PC-9 (cell line): ENCODE measurements at regions of chr3 and their contacts with region 1.

Region 1: DNA sequence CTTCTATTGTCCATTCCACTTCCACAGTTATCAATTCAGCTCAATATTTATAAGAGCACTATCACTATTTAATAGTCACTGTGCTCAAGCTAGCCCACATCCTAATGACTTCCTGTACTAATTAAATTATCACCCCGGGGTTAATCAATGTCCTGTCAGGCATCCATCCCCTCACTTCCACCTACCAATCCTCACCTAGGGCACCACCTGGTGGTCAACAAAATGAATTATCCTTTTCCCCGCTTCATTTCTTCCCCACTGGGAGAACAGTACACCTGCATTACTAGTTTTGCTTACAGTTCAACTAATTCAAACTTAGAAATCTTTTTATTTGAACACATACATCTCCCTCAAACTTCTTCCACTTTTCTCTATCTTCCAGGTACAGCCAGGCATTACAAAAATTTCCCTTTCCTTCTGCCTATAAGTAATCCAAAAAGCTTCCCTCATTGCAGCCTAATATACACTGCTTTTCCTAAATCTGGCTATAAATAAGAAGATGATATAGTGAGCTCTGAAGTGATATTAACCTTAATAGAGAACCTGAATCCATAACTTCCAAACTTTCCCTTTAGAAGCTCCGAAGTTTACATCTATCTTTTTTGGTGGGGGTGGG is 68.5 kb downstream of the TMCC1 start:
- DNase-seq: peak; percentile 39 to 52
- H3K4me3 ChIP-seq: no peak overlapping the region
- H3K27ac ChIP-seq: no peak overlapping the region
- H3K4me1 ChIP-seq: peaks cover 32% of the 10 kb centered on the region
- H3K27me3 ChIP-seq: no peaks in the 10 kb centered on the region
- CTCF ChIP-seq: peak; percentile 87

Region 2: GRCh38 chr3:129249276-129250065 is 575.6 kb before region 1 on chr3 and contains the start of gene COPG1:
- CTCF ChIA-PET with region 1: interaction called, 23 read pairs
- POLR2A ChIA-PET with region 1: interaction called, 4 read pairs
- intact Hi-C with region 1: no loop called
- DNase-seq: peak; percentile 73 to 92
- H3K4me3 ChIP-seq: peak within 1 kb of the TSS; percentile 88
- H3K27ac ChIP-seq: peak within 1 kb of the TSS; percentile 56
- H3K4me1 ChIP-seq: peaks cover 21% of the 10 kb centered on the region
- H3K27me3 ChIP-seq: no peaks in the 10 kb centered on the region
- CTCF ChIP-seq: no peak
- total RNA-seq, gene COPG1: 195 and 212 TPM in 2 replicates

Region 3: DNA sequence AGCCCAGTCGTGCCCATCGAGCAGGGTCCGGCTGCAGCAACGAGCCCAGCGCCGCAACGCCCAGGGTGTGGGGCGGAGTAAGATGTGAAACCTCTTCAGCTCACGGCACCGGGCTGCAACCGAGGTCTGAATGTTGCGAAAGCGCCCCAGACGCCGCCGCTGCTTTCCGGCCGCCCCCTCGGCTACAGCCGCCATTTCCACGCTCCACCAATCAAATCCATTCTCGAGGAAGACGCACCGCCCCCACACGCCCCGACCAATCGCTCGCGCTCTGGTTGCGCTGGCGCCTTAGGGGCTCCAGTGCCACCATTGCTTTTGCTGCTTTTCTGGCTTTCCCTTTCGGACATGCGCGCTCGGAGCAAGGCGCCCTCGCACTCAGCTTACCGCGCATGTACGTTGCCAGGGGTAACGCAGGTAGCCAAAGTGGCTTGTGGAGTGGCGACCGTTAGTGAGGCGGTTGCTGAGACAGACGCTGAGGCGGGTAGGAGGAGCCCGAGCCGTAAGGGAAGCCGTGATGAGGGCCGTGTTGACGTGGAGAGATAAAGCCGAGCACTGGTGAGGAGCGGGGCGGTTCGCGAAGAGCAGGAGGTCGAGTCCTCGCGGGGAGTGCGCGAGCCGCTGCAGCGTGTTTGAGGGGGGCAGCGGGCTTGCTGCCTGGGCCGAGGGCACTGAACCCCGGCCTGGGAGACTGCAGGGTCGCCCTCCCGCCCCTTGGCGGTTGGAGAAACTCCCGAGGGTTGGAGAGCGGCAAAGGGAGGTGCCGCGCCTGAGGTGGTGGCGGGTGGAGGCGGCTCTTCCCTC is 385.0 kb before region 1 on chr3 and contains the starts of genes IFT122 and MBD4:
- CTCF ChIA-PET with region 1: interaction called, 18 read pairs
- POLR2A ChIA-PET with region 1: no interaction called
- intact Hi-C with region 1: no loop called
- DNase-seq: peak; percentile 97 to 99
- H3K4me3 ChIP-seq: peak within 1 kb of the TSS; percentile 79
- H3K27ac ChIP-seq: peak within 1 kb of the TSS; percentile 62
- H3K4me1 ChIP-seq: peaks cover 38% of the 10 kb centered on the region
- H3K27me3 ChIP-seq: no peaks in the 10 kb centered on the region
- CTCF ChIP-seq: no peak
- total RNA-seq, gene IFT122: 44.8 and 55.6 TPM in 2 replicates
- total RNA-seq, gene MBD4: 48.6 and 49.4 TPM in 2 replicates

Region 4: GRCh38 chr3:129650256-129650872 is 174.7 kb before region 1 on chr3:
- CTCF ChIA-PET with region 1: interaction called, 6 read pairs
- POLR2A ChIA-PET with region 1: no interaction called
- intact Hi-C with region 1: loop called (anchors 1 kb)
- DNase-seq: peak; percentile 68 to 78
- H3K4me3 ChIP-seq: no peak overlapping the region
- H3K27ac ChIP-seq: peak overlapping the region; percentile 91
- H3K4me1 ChIP-seq: peaks cover 64% of the 10 kb centered on the region
- H3K27me3 ChIP-seq: no peaks in the 10 kb centered on the region
- CTCF ChIP-seq: peak; percentile 83

Region 5: GRCh38 chr3:129809297-129809696 is 15.7 kb before region 1 on chr3:
- CTCF ChIA-PET with region 1: no interaction called
- POLR2A ChIA-PET with region 1: no interaction called
- intact Hi-C with region 1: no loop called
- DNase-seq: no peak
- H3K4me3 ChIP-seq: no peak overlapping the region
- H3K27ac ChIP-seq: 0 out of 2 replicates have a peak overlapping the region, but pooled peaks have one; percentile 19
- H3K4me1 ChIP-seq: no peaks in the 10 kb centered on the region
- H3K27me3 ChIP-seq: no peaks in the 10 kb centered on the region
- CTCF ChIP-seq: no peak

Region 6: DNA sequence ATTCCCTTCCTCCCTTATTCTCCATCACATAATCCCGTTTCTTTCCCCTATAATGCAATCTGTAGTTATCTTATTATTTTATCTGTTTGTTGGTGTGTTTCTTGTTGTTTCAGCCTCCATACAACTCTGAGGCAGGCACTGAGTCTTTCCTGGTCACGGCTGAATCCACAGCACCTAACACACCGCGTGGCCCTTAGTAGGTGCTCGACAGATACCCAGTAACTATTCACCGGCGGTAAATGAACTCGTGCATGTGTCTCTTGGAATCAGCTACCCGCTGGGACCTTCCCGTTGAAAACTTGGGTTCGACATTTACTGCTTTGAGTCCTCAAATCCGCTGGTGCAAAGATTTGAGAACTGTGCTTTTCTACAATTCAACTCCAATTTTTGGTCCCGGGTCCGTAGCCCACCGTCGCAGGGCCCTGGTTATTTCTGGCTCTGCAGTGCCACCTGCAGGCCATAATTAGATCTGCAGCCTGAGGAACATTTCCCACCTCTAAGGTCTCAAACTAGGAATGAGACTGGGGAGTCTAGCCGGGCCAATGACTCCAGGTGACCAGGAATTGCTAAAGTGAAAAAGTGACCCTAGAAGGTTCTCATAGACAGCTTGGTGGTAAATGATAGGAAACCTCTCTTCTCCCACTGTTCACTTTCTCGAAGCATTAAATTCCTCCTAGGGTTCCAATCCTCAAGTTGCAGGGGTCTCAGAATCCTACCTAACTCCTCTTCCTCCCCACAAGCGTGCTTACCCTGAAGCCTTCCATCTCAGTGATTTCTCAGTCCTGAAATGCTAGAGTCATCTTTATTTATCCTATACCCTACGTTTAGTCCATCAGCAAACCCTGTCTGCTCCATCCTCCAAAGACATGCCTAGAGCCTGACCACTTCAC is 109.4 kb after region 1 on chr3:
- CTCF ChIA-PET with region 1: interaction called, 5 read pairs
- POLR2A ChIA-PET with region 1: no interaction called
- intact Hi-C with region 1: loop called (anchors 1 kb)
- DNase-seq: peak in 1 of 2 experiments; percentile 26
- H3K4me3 ChIP-seq: no peak overlapping the region
- H3K27ac ChIP-seq: no peak overlapping the region
- H3K4me1 ChIP-seq: no peaks in the 10 kb centered on the region
- H3K27me3 ChIP-seq: no peaks in the 10 kb centered on the region
- CTCF ChIP-seq: peak; percentile 98

Region 7: GRCh38 chr3:130258532-130258952 is 433.5 kb after region 1 on chr3:
- CTCF ChIA-PET with region 1: no interaction called
- POLR2A ChIA-PET with region 1: no interaction called
- intact Hi-C with region 1: no loop called
- DNase-seq: no peak
- H3K4me3 ChIP-seq: no peak overlapping the region
- H3K27ac ChIP-seq: no peak overlapping the region
- H3K4me1 ChIP-seq: no peaks in the 10 kb centered on the region
- H3K27me3 ChIP-seq: peaks cover 36% of the 10 kb centered on the region
- CTCF ChIP-seq: no peak